IMR-90 (cell line): ENCODE measurements at regions of chr9 and their contacts with region 1.

Region 1: GRCh38 chr9:33623658-33624586 is 99.9 kb downstream of the ANKRD18B start:
- DNase-seq: peak; percentile 67
- ATAC-seq: peak; percentile 78
- H3K4me3 ChIP-seq: no peak overlapping the region
- H3K27ac ChIP-seq: no peak overlapping the region
- H3K4me1 ChIP-seq: peaks cover 8% of the 10 kb centered on the region
- H3K27me3 ChIP-seq: peaks cover 3% of the 10 kb centered on the region
- CTCF ChIP-seq: peak; percentile 90
- POLR2A ChIP-seq: no peak
- RAD21 ChIP-seq: peak; percentile 89

Region 2: GRCh38 chr9:33524306-33524947 is 99.5 kb before region 1 on chr9:
- CTCF ChIA-PET with region 1: no interaction called
- POLR2A ChIA-PET with region 1: no interaction called
- dilution Hi-C with region 1: no loop called
- in situ Hi-C with region 1: no loop called
- intact Hi-C with region 1: loop called (anchors 5 kb)
- DNase-seq: no peak
- ATAC-seq: peak; percentile 46
- H3K4me3 ChIP-seq: peak overlapping the region; percentile 93
- H3K27ac ChIP-seq: peak overlapping the region; percentile 42; the same call in 1 of the 2 replicates
- H3K4me1 ChIP-seq: no peaks in the 10 kb centered on the region
- H3K27me3 ChIP-seq: no peaks in the 10 kb centered on the region
- CTCF ChIP-seq: no peak
- POLR2A ChIP-seq: no peak
- RAD21 ChIP-seq: no peak

Region 3: DNA sequence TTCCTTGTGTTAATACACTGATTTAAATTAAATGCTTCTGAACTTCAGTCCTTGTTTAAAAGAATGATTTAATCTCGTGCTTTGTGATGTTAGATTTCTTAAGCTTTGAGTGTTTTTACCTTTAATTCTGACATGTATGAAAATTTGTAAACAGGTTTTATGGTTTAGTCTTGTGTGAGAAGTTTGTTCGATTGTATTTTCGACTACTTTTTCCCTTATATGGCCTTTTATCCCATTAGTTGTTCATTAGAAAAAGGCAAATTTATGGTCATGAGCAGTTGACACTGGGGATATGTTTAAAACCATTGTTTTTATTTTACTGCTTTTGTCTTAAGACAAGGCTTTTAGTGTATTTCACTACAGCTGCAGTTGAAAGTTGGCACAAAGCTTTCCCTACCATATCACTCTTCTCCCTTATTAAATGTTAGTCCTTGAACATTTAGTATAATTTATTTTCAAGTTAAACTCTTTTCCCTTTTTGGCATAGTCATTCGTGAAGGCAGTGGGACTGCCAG is 196.4 kb after region 1 on chr9:
- CTCF ChIA-PET with region 1: no interaction called
- POLR2A ChIA-PET with region 1: no interaction called
- dilution Hi-C with region 1: no loop called
- in situ Hi-C with region 1: no loop called
- intact Hi-C with region 1: no loop called
- DNase-seq: no peak
- ATAC-seq: no peak
- H3K4me3 ChIP-seq: peak overlapping the region; percentile 7; the same call in 1 of the 2 replicates
- H3K27ac ChIP-seq: no peak overlapping the region
- H3K4me1 ChIP-seq: peaks cover 9% of the 10 kb centered on the region
- H3K27me3 ChIP-seq: no peaks in the 10 kb centered on the region
- CTCF ChIP-seq: no peak
- POLR2A ChIP-seq: no peak
- RAD21 ChIP-seq: no peak